Endothelial cell of umbilical vein (primary cell): ENCODE measurements at regions of chr5 and their contacts with region 1.

Region 1: DNA sequence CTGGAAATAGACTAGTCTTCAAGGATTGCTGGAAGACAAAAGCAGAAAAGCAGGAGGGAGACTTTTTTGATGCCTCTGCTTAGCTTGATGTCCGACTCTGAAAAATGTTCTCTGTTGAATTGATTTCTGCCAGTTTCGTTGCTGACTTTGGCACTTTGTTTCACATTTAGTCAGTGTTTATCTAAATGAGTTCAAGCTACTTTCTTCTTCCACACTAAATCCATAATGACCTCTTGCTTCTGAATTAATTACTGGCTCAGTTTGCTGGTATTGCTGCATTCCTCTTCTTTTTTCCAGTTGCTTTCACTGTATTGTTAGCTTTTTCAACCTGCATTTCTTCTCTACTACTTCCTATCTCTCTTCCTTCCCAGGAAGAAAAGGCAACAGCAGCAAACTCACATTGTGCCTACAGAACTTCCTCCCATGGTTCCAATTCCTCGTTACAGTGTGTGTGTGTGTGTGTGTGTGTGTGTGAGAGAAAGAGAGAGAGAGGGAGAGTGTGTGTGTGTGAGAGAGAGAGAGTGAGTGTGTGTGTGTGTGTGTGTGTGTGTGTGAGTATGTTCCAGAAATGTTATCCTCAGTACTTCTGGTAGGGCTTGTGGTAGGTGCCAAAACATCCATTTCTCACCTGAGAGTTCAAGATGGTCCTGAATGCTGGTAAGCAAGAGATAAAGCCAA is 234.8 kb downstream of the CSNK1G3 start:
- DNase-seq: peak; percentile 16
- H3K4me3 ChIP-seq: no peak overlapping the region
- H3K27ac ChIP-seq: no peak overlapping the region
- H3K4me1 ChIP-seq: no peaks in the 10 kb centered on the region
- H3K27me3 ChIP-seq: no peaks in the 10 kb centered on the region
- CTCF ChIP-seq: no peak
- POLR2A ChIP-seq: no peak

Region 2: DNA sequence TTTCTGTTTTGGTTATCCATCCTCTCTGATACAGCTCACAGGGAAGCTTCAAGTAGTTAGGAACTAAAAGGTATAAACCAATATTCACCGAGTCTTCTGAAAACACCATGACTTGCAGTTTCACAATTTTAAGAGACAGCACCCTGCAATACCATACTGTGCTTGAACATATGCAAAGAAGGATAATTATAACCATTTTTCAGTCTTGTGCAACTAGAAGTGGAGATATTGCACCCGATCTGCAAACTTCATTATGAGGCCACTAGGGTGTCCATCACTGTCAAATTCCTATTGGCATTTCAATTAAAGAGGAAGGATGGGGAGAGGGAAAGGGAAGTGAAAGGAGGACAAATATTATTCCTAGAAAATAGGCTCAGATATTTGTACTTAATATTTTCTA is 291.2 kb before region 1 on chr5:
- CTCF ChIA-PET with region 1: no interaction called
- POLR2A ChIA-PET with region 1: no interaction called
- dilution Hi-C with region 1: no loop called
- intact Hi-C with region 1: no loop called
- DNase-seq: no peak
- H3K4me3 ChIP-seq: no peak overlapping the region
- H3K27ac ChIP-seq: no peak overlapping the region
- H3K4me1 ChIP-seq: peaks cover 6% of the 10 kb centered on the region
- H3K27me3 ChIP-seq: no peaks in the 10 kb centered on the region
- CTCF ChIP-seq: no peak
- POLR2A ChIP-seq: no peak

Region 3: DNA sequence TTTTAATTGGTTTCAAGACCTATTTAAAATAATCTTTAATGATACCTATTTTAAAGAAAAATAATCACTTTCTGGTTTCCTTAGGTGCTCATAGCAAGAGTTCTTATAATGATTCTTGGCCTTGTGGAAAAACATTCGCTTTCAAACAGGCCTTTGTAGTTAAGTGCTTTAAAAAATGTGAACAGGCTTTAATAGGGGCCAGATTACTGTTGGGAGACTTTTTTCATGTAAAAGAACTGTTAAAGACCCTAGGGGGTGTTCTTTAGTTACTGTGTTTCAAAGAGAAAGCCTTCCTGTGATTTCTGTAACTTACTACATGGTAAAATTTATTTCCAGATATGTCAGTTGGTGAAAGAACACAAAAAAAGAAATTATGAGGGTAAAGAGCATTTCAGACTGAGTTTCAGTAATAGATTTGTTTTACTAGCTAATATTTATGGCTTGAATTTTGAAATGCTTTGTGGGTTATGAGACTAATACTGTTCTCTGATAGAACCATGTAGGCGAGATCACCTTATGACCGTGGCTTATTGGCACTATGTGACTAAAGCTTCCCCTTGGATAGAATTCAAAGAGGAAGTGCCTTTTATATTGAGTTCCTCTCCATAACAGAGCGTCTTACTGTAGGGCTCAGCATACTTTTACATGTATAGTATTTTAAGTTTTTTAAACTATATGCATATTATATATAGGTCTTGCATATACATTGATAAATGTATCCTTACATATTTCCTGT is 164.1 kb before region 1 on chr5:
- CTCF ChIA-PET with region 1: no interaction called
- POLR2A ChIA-PET with region 1: no interaction called
- dilution Hi-C with region 1: no loop called
- intact Hi-C with region 1: no loop called
- DNase-seq: peak; percentile 78
- H3K4me3 ChIP-seq: no peak overlapping the region
- H3K27ac ChIP-seq: peak overlapping the region; percentile 28
- H3K4me1 ChIP-seq: peaks cover 13% of the 10 kb centered on the region
- H3K27me3 ChIP-seq: no peaks in the 10 kb centered on the region
- CTCF ChIP-seq: no peak
- POLR2A ChIP-seq: no peak

Region 4: GRCh38 chr5:123735384-123735783 is 11.4 kb before region 1 on chr5:
- CTCF ChIA-PET with region 1: interaction called, 3 read pairs
- POLR2A ChIA-PET with region 1: no interaction called
- dilution Hi-C with region 1: no loop called
- intact Hi-C with region 1: loop called (anchors 1 kb)
- DNase-seq: no peak
- H3K4me3 ChIP-seq: no peak overlapping the region
- H3K27ac ChIP-seq: no peak overlapping the region
- H3K4me1 ChIP-seq: no peaks in the 10 kb centered on the region
- H3K27me3 ChIP-seq: no peaks in the 10 kb centered on the region
- CTCF ChIP-seq: no peak
- POLR2A ChIP-seq: no peak